Heart right ventricle (tissue), 16 donors: ENCODE measurements at regions of chr15 and their contacts with region 1.

Region 1: DNA sequence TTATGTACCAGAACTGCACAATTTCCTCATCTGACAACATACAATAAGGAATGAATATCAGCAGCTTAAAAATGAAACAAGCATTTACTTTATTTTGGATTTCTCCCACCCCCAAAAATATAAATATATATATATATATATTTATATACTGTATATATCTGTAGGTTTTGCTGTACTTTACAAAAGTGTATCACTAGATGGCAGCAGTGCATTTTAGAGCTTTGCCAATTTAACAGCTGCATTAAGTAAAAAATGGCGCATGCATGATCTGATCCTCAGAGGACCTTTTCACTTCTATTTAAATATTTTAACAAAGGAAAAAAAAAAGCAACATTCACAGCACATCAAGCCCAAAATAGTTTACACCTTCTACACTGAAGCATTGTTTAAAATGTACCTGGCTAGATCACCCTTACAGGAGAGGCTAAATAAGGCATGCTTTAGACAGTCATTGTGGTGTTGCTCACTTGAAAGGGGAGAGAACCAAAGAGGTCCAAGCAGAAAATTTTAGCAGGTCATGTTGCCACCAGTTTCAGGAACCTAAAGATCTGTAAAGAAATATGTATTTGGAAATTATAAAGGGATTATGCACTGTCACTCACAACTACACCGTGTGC is 72.6 kb downstream of the NPTN start:
- DNase-seq: peak in 1 of 2 donors; percentile 36
- ATAC-seq: peak in 4 of 8 donors; percentile 46 to 54 (median 50)
- H3K4me3 ChIP-seq: no peak overlapping the region
- H3K27ac ChIP-seq: no peak overlapping the region
- H3K4me1 ChIP-seq: peaks cover 0 to 23% (median 11%) of the 10 kb centered on the region in 9 donors
- H3K27me3 ChIP-seq: no peaks in the 10 kb centered on the region
- CTCF ChIP-seq: peak; percentile 26 to 74 (median 55)

Region 2: GRCh38 chr15:73504885-73505284 is 55.7 kb before region 1 on chr15:
- intact Hi-C with region 1: no loop called
- DNase-seq: no peak
- ATAC-seq: no peak
- H3K4me3 ChIP-seq: no peak overlapping the region
- H3K27ac ChIP-seq: no peak overlapping the region
- H3K4me1 ChIP-seq: no peaks in the 10 kb centered on the region
- H3K27me3 ChIP-seq: peaks cover 0 to 12% (median 0%) of the 10 kb centered on the region in 7 donors
- CTCF ChIP-seq: no peak

Region 3: GRCh38 chr15:73927476-73928240 is 367.0 kb after region 1 on chr15:
- intact Hi-C with region 1: loop called in 1 of 10 experiments (anchors 10 kb)
- DNase-seq: peak in 1 of 2 donors; percentile 67
- ATAC-seq: peak; percentile 17 to 51 (median 43)
- H3K4me3 ChIP-seq: peak overlapping the region; percentile 51 to 77 (median 66)
- H3K27ac ChIP-seq: peak overlapping the region; percentile 80 to 95 (median 92)
- H3K4me1 ChIP-seq: peaks cover 32 to 94% (median 67%) of the 10 kb centered on the region in 9 donors
- H3K27me3 ChIP-seq: peaks cover 0 to 33% (median 3%) of the 10 kb centered on the region in 7 donors
- CTCF ChIP-seq: peak; percentile 23 to 72 (median 55)